ENCODE measurements at regions of chr17 and their contacts with region 1.

Region 1: GRCh38 chr17:71412803-71413202 is 708.0 kb upstream of the SOX9 start:
- DNase-seq: peak; percentile 98
- H3K4me3 ChIP-seq: no peak overlapping the region
- H3K27ac ChIP-seq: peak overlapping the region; percentile 97
- H3K4me1 ChIP-seq: peaks cover 42% of the 10 kb centered on the region
- H3K27me3 ChIP-seq: no peaks in the 10 kb centered on the region
- CTCF ChIP-seq: no peak

Region 2: DNA sequence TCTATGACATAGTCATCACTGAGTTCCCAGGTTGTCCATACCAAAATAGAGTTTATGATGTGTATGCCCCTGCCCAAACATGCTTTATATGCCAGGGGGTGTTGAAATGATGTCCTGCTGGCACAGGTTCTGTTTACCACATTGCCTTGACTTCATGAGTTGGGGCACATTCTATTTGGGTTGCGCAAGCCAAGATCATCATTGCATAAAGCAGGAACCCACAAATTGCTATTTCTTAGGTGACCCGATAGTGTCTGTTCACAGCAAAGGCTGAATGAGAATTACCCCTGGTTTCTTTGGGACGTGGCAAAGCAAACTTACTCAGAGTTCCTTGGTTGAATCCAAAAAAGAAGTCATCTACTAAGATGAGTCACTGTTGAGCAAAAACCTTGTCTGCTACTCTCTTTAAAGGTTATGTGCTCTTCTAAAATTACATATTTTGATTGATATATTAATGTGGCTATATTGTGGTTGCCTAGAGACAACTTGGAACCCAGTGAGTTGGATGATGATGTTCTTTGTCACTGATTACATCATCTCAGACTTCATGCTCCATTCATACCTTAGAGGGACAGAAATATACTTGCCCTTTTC is 204.6 kb before region 1 on chr17:
- CTCF ChIA-PET with region 1: no interaction called
- dilution Hi-C with region 1: no loop called
- in situ Hi-C with region 1: loop called in 1 of 2 experiments (anchors 25 kb)
- intact Hi-C with region 1: loop called (anchors 2 kb)
- DNase-seq: peak; percentile 100
- H3K4me3 ChIP-seq: no peak overlapping the region
- H3K27ac ChIP-seq: peak overlapping the region; percentile 99
- H3K4me1 ChIP-seq: peaks cover 14% of the 10 kb centered on the region
- H3K27me3 ChIP-seq: no peaks in the 10 kb centered on the region
- CTCF ChIP-seq: no peak

Region 3: DNA sequence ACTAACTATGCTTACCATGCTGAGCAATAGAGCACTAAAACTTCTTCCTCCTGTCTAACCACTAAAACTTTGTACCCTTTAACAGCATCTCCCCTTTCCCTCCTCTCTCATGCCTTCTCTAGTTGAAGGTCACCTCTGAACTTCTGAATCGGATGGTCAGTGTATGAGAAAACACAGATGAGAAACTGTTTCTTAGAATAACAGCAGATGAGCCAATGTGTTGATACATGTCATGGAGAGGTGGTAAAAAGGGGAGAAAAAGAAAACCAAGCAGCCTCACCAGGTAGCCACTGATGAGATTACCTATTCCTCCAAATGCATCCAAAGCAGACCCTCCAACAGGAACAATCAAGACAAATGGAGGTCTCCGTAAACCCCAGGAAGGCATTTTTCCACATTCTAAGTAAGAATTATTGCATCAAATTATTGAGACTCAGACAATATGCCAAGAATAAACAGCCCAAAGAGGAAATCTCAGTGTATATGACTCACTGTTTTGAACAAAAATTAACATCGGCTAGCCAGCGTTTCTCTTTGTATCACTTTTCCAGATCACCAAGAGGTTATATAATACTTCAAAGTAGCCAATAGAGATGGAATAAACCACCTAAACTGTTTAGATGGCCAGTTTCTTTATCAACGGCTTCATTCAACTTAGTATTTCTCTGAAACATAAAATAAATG is 85.3 kb before region 1 on chr17:
- CTCF ChIA-PET with region 1: no interaction called
- dilution Hi-C with region 1: no loop called
- in situ Hi-C with region 1: no loop called
- intact Hi-C with region 1: no loop called
- DNase-seq: peak; percentile 45
- H3K4me3 ChIP-seq: no peak overlapping the region
- H3K27ac ChIP-seq: no peak overlapping the region
- H3K4me1 ChIP-seq: peaks cover 5% of the 10 kb centered on the region
- H3K27me3 ChIP-seq: no peaks in the 10 kb centered on the region
- CTCF ChIP-seq: no peak

Region 4: DNA sequence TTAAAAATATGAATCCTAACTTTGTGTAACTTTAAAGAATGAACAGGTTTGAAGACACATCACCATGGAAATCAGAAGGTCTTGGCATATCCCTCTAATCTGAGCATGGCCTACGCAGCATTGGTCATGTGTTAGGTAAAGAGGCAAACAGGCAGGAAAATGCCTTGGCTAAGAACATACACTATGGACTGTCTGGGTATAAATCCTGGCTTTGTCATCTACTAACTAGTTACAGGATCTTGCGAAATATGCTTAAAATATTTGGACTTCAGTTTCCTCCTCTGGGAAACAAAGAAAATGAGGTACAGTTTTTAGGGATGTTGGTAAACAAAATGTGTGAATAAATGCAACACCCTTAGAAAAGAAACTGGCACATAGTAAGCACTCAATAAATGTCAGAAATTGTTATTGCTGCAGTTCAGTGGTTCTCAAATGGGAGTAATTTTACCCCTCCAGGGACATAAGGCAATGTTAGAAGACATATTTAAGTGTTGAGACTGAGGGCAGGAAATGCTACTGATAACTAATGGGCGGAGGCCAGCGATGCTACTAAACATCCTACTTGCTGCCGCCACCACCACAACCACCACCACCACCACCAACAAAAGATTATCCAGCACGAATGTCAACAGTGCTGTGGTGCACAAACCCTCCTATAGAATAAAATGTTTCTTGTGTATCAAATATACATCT is 62.7 kb before region 1 on chr17:
- CTCF ChIA-PET with region 1: no interaction called
- dilution Hi-C with region 1: no loop called
- in situ Hi-C with region 1: no loop called
- intact Hi-C with region 1: no loop called
- DNase-seq: no peak
- H3K4me3 ChIP-seq: no peak overlapping the region
- H3K27ac ChIP-seq: no peak overlapping the region
- H3K4me1 ChIP-seq: no peaks in the 10 kb centered on the region
- H3K27me3 ChIP-seq: no peaks in the 10 kb centered on the region
- CTCF ChIP-seq: no peak

Region 5: GRCh38 chr17:71423871-71424546 is 11.2 kb after region 1 on chr17:
- CTCF ChIA-PET with region 1: no interaction called
- dilution Hi-C with region 1: no loop called
- in situ Hi-C with region 1: no loop called
- intact Hi-C with region 1: loop called (anchors 1 kb)
- DNase-seq: peak; percentile 99
- H3K4me3 ChIP-seq: no peak overlapping the region
- H3K27ac ChIP-seq: peak overlapping the region; percentile 96
- H3K4me1 ChIP-seq: peaks cover 31% of the 10 kb centered on the region
- H3K27me3 ChIP-seq: no peaks in the 10 kb centered on the region
- CTCF ChIP-seq: peak in 1 of 2 donors; percentile 38

Region 6: DNA sequence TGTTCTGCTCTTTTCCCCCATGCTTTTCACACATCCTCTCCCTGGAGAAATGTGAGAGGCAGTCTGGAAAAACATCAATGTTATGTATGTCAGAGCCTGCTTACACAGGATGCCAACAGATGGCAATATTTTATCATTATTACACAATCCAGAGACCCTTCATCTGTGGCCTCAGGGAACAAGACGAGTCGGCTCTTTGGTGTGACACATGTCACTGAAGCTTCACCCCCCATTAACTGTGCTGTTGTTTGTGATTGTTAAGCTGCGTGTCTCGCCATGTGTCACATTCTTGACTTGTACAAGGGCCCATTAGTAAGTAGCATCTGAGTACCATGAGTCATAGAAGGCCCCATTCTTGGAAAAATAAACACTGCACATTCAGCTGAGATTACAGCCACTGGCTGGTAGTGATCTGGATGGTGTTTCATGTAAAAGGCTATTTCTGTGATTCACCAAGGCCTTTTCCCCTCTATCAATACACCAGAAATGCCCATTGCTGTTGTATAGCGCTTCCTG is 25.9 kb after region 1 on chr17:
- CTCF ChIA-PET with region 1: interaction called, 6 read pairs
- dilution Hi-C with region 1: loop called (anchors 5 kb)
- in situ Hi-C with region 1: no loop called
- intact Hi-C with region 1: no loop called
- DNase-seq: peak; percentile 96
- H3K4me3 ChIP-seq: no peak overlapping the region
- H3K27ac ChIP-seq: peak overlapping the region; percentile 82
- H3K4me1 ChIP-seq: peaks cover 37% of the 10 kb centered on the region
- H3K27me3 ChIP-seq: no peaks in the 10 kb centered on the region
- CTCF ChIP-seq: no peak

Region 7: GRCh38 chr17:71460943-71461342 is 48.1 kb after region 1 on chr17:
- CTCF ChIA-PET with region 1: no interaction called
- dilution Hi-C with region 1: no loop called
- in situ Hi-C with region 1: no loop called
- intact Hi-C with region 1: loop called (anchors 1 kb)
- DNase-seq: no peak
- H3K4me3 ChIP-seq: no peak overlapping the region
- H3K27ac ChIP-seq: no peak overlapping the region
- H3K4me1 ChIP-seq: peaks cover 41% of the 10 kb centered on the region
- H3K27me3 ChIP-seq: no peaks in the 10 kb centered on the region
- CTCF ChIP-seq: peak; percentile 20 to 36

Region 8: GRCh38 chr17:71633391-71633849 is 220.6 kb after region 1 on chr17:
- CTCF ChIA-PET with region 1: no interaction called
- dilution Hi-C with region 1: no loop called
- in situ Hi-C with region 1: no loop called
- intact Hi-C with region 1: loop called (anchors 5 kb)
- DNase-seq: peak; percentile 99
- H3K4me3 ChIP-seq: peak overlapping the region in 1 of 3 experiments; percentile 14
- H3K27ac ChIP-seq: peak overlapping the region; percentile 75
- H3K4me1 ChIP-seq: peaks cover 43% of the 10 kb centered on the region
- H3K27me3 ChIP-seq: no peaks in the 10 kb centered on the region
- CTCF ChIP-seq: no peak

Measured in mammary epithelial cell (primary cell).